Activated naive CD4-positive, alpha-beta T cell treated with anti-CD3 and anti-CD28 coated beads, Interleukin-2, amount 10 ng/mL, durations not matched to agents 7 days and 5 days (primary cell): ENCODE measurements at regions of chr3 and their contacts with region 1.

Region 1: GRCh38 chr3:46960081-46960701 is 16.4 kb downstream of the CCDC12 start:
- DNase-seq: no peak
- H3K4me3 Mint-ChIP-seq: no peak overlapping the region
- H3K27ac Mint-ChIP-seq: peak overlapping the region; percentile 25
- H3K4me1 Mint-ChIP-seq: peaks cover 60% of the 10 kb centered on the region
- H3K27me3 Mint-ChIP-seq: no peaks in the 10 kb centered on the region

Region 2: DNA sequence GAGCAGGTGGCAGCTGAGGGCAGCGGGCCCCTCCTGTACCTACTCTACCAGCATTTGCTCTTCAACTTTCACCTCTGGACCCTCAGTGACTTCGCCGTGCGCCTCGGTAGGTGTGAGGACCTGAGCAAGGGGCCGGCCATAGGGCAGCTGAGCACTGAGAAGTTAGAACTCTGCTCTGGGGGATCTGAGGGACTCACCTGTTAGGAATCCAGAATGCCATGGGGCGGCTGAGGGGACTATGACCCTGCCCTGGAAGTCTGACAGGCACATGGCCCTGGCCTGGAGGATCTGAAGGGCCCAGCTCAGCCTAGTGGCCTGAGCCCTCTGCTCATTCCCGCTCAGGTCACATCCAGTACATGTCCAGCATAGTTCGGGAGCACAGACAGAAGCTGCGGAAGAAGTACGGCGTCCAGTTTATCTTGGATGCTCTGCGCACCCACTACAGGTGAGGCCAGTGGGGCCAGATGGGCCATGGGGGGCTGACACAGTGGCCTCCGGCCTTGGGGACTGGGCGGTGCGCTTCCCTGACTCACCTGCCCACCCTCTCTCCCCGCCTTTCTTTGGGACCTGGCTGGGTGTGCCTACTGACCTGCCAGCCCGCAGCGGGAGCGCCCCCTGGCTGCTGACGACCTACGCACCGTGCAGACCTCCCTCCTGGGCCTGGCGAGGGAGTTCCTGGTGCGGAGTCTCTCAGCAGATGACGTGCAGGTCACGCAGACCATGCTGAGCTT is 38.1 kb after region 1 on chr3:
- CTCF ChIA-PET with region 1: interaction called, 19 read pairs
- DNase-seq: peak; percentile 81
- H3K4me3 Mint-ChIP-seq: no peak overlapping the region
- H3K27ac Mint-ChIP-seq: no peak overlapping the region
- H3K4me1 Mint-ChIP-seq: peaks cover 9% of the 10 kb centered on the region
- H3K27me3 Mint-ChIP-seq: no peaks in the 10 kb centered on the region